Activated naive CD4-positive, alpha-beta T cell treated with anti-CD3 and anti-CD28 coated beads for 36 hours (primary cell): ENCODE measurements at regions of chr10 and their contacts with region 1.

Region 1: DNA sequence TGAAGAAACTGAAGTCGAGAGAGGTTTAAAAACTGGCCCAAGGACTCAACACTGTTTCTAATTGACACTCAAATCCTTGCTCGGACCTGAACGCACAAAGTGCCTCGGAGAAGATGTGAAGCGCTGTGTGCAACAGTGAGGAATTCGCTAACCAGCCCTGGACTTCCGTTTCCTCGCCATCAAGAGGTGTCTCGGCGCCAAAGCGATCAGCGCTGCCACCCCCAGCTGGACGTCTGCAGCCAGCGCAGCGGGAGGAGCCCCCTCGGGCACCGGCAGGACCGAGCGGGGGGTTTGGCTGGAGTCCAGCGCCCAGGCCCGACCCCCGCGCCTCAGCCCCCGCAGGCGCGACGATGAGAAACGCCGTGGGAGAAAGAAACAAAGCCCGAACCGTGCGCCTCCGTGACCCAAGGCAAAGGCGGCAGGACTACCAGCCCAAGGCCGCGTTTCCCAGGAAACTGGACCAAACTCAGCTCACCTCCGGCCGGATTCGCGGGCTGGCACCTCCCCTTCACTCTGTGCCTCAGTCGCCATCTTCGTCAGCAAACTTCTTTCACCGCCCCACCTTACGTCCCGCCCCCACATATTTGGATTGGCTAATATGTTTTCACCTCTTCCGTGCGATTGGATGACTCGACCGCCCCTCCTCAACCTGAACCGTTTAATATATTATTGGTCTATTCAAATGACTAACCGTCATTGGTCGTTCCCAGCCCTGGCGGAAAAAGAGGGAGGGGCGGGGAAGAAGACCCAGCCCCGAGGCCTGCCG is at the start of gene ARHGAP19:
- DNase-seq: peak; percentile 98
- H3K4me3 Mint-ChIP-seq: peak within 1 kb of the TSS; percentile 91
- H3K27ac Mint-ChIP-seq: peak within 1 kb of the TSS; percentile 88
- H3K4me1 Mint-ChIP-seq: peaks cover 23% of the 10 kb centered on the region
- H3K27me3 Mint-ChIP-seq: no peaks in the 10 kb centered on the region
- total RNA-seq, gene ARHGAP19: 76.7 to 91.9 TPM

Region 2: GRCh38 chr10:97109547-97109946 is 182.7 kb before region 1 on chr10:
- CTCF ChIA-PET with region 1: no interaction called
- intact Hi-C with region 1: no loop called
- DNase-seq: no peak
- H3K4me3 Mint-ChIP-seq: no peak overlapping the region
- H3K27ac Mint-ChIP-seq: no peak overlapping the region
- H3K4me1 Mint-ChIP-seq: no peaks in the 10 kb centered on the region
- H3K27me3 Mint-ChIP-seq: peaks cover 7% of the 10 kb centered on the region

Region 3: DNA sequence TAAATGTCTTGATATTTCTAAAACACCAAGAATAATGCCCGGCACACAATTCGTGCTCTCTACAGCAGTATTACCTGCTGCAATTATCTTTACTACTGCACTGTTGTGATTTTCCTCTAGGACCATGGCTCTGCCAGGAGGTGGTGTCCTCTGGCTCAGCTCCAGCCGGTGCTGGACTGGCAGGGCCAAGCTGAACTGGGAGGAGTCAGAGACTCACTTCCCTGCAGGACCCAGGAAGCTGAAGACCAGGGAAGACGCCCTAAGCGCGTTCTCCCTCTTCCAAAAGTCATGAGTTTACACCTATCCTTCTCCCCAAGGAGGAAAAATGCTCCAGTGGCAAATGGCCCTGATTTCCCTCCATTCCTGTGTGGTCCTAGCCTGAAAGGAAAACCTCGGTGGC is 122.0 kb before region 1 on chr10:
- CTCF ChIA-PET with region 1: no interaction called
- intact Hi-C with region 1: no loop called
- DNase-seq: no peak
- H3K4me3 Mint-ChIP-seq: no peak overlapping the region
- H3K27ac Mint-ChIP-seq: no peak overlapping the region
- H3K4me1 Mint-ChIP-seq: no peaks in the 10 kb centered on the region
- H3K27me3 Mint-ChIP-seq: peaks cover 14% of the 10 kb centered on the region

Region 4: DNA sequence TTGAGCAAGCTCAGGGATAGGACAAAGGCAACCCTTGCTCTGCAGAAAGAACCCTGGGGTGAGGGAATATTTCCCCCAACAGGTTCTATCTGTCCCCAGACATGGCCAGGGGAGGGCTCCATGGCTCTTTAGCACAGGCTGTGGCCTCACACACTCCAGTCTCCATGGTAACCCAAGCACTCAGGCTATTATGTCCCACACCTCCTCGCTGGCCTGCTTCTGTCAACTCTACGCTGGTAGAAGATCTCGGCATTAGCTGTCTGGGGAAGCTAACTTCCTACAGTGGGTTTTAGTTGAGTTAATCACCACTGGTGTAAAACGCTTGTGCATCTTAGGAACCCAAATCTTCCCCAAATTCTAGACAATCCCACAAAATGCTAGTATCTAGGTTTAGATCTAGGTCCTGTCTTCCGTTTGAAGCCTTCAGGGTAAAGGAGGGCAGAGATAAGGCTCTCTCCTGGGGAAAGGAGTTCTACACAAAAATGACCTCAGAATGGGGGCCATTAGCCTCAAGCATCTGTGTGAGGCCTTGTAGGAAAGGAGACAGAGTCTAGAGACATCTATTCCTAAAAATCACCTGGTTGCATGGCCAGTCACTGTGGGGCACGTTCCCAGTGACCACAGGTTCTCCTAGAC is 69.8 kb before region 1 on chr10:
- CTCF ChIA-PET with region 1: no interaction called
- intact Hi-C with region 1: loop called (anchors 1 kb)
- DNase-seq: no peak
- H3K4me3 Mint-ChIP-seq: no peak overlapping the region
- H3K27ac Mint-ChIP-seq: no peak overlapping the region
- H3K4me1 Mint-ChIP-seq: peaks cover 24% of the 10 kb centered on the region
- H3K27me3 Mint-ChIP-seq: no peaks in the 10 kb centered on the region

Region 5: DNA sequence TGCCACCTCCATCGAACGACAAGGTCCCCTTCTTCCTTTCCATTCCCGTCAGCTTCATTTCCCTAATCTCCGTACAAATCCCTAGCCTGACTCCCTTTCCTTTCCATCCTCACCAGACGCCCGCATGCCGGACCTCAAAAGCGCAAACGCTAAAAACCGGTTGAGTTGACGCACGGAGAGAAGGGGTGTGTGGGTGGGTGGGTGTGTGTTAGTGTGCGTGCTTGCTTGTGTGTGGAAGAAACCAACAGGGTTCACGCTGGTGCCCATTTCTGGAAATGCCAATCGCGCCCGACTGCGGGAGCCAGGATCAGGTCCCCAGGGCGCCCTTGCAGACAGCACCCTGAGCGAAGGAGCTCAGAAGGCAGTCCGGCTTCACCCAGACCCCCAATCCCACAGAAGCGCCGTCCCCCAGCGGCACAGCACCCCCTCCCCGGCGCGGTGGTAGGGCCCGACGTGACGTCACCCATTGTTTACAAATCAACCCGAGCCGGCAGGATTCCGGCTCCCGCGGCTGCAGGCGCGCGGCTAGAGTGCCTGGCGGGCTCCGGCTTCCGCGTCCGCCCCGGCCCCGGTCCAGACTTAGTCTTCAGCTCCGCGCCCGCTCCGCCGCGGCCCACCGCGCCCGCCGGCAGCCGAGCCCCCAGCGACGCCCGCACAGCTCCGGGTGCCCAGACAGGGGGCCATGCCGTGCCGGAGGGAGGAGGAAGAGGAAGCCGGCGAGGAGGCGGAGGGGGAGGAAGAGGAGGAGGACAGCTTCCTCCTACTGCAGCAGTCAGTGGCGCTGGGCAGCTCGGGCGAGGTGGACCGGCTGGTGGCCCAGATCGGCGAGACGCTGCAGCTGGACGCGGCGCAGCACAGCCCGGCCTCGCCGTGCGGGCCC is 26.7 kb after region 1 on chr10 and contains the start of gene FRAT1:
- CTCF ChIA-PET with region 1: no interaction called
- intact Hi-C with region 1: loop called (anchors 1 kb)
- DNase-seq: peak; percentile 89
- H3K4me3 Mint-ChIP-seq: peak within 1 kb of the TSS; percentile 87
- H3K27ac Mint-ChIP-seq: peak within 1 kb of the TSS; percentile 95
- H3K4me1 Mint-ChIP-seq: peaks cover 23% of the 10 kb centered on the region
- H3K27me3 Mint-ChIP-seq: no peaks in the 10 kb centered on the region
- total RNA-seq, gene FRAT1: 2.3 to 3.0 TPM

Region 6: GRCh38 chr10:97425964-97426775 is 133.9 kb after region 1 on chr10 and contains the start of gene PGAM1:
- CTCF ChIA-PET with region 1: interaction called, 3 read pairs
- intact Hi-C with region 1: loop called (anchors 1 kb)
- DNase-seq: peak; percentile 95
- H3K4me3 Mint-ChIP-seq: peak within 1 kb of the TSS; percentile 90
- H3K27ac Mint-ChIP-seq: peak within 1 kb of the TSS; percentile 98
- H3K4me1 Mint-ChIP-seq: peaks cover 50% of the 10 kb centered on the region
- H3K27me3 Mint-ChIP-seq: no peaks in the 10 kb centered on the region
- total RNA-seq, gene PGAM1: 1,371 to 1,393 TPM

Region 7: GRCh38 chr10:97686962-97687784 is 394.9 kb after region 1 on chr10 and contains the start of gene AVPI1:
- CTCF ChIA-PET with region 1: no interaction called
- intact Hi-C with region 1: loop called (anchors 1 kb)
- DNase-seq: peak; percentile 96
- H3K4me3 Mint-ChIP-seq: peak within 1 kb of the TSS; percentile 81
- H3K27ac Mint-ChIP-seq: no peak within 1 kb of the TSS
- H3K4me1 Mint-ChIP-seq: peaks cover 12% of the 10 kb centered on the region
- H3K27me3 Mint-ChIP-seq: no peaks in the 10 kb centered on the region
- total RNA-seq, gene AVPI1: 1.5 to 1.9 TPM